ENCODE measurements at regions of chr13 and their contacts with region 1.

Region 1: DNA sequence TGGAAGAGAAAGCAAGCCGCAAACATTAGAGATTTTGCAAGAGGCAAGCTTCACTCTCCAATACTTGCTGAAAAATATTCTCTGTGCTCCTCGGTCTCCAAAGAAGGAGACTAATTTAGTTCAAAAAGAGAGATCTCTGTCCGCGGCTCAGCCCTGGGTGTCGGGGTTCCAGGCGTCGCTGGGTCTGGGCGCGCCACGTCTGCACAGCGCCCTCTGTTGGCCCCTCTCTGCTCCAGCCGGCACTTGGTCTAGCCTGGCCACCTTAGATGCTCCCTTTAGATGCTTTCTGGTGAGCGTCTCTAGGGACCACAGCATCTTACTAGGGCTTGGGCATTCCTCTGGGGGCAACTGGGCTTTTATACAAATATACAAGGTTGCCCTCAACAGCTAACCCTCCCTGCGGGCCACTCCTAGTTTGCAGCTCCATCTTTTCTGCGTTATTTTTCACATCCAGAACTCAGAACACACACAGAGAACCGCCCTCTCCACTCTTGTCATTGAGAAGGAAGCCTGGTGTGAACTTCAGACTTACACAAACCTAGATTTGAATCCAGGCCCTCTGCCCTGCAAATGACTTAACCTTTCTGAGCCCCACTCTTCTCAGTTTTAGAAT is 78.3 kb downstream of the CYSLTR2 start:
- DNase-seq: peak in 1 of 2 donors; percentile 46
- ATAC-seq: peak in 5 of 8 donors; percentile 35 to 75 (median 53)
- H3K4me3 ChIP-seq: peak overlapping the region in 3 of 10 donors; percentile 13 to 28 (median 22)
- H3K27ac ChIP-seq: peak overlapping the region in 1 of 10 donors; percentile 28
- H3K4me1 ChIP-seq: peaks cover 0 to 17% (median 0%) of the 10 kb centered on the region in 9 donors
- H3K27me3 ChIP-seq: no peaks in the 10 kb centered on the region
- CTCF ChIP-seq: peak in 8 of 9 donors; percentile 22 to 78 (median 62)

Region 2: DNA sequence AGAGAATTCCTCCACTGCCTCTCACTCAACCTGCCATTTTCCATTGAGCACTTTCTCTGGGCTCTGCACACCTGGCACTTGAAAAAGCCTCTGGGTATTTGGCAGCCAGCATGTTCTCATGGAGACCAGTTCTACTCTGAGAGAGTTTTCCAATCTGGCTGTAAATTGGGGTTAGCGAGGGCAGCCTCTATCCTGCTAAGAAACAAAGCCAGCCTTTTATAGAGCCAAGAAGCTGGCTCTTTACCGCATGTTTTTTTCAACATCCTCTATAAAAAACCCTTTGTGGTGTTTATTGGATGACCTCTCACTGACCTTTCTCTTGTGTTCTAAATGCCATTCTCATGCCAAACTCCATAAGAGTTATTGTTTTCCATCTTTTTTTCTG is 146.6 kb before region 1 on chr13:
- intact Hi-C with region 1: loop called in 2 of 10 experiments (anchors 5 to 10 kb)
- DNase-seq: peak in 1 of 2 donors; percentile 42
- ATAC-seq: peak; percentile 56 to 87 (median 76)
- H3K4me3 ChIP-seq: no peak overlapping the region
- H3K27ac ChIP-seq: peak overlapping the region in 8 of 10 donors; percentile 36 to 79 (median 54)
- H3K4me1 ChIP-seq: peaks cover 3 to 51% (median 37%) of the 10 kb centered on the region in 9 donors
- H3K27me3 ChIP-seq: no peaks in the 10 kb centered on the region
- CTCF ChIP-seq: no peak

Region 3: DNA sequence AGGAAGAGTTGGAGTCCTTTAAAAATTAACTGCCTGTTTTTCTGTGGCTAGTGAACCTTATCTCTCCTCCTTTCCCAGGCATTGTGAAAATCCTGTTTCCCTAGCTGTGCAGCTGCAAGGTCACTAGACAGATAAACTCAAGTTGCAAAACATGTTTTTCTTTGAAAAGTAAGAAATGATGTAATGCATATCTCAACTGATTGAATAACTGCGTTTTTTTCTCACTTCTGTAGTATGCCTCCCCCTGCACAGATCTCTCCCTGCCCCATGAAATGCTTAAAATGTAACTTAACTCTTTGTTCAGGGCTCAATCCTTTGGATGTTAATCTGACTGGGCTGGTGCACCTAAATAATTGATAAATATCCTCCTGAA is 106.0 kb before region 1 on chr13:
- intact Hi-C with region 1: loop called in 1 of 10 experiments (anchors 10 kb)
- DNase-seq: peak in 1 of 2 donors; percentile 48
- ATAC-seq: peak in 6 of 8 donors; percentile 46 to 73 (median 55)
- H3K4me3 ChIP-seq: no peak overlapping the region
- H3K27ac ChIP-seq: peak overlapping the region; percentile 63 to 92 (median 79)
- H3K4me1 ChIP-seq: peaks cover 0 to 46% (median 26%) of the 10 kb centered on the region in 9 donors
- H3K27me3 ChIP-seq: no peaks in the 10 kb centered on the region
- CTCF ChIP-seq: no peak

Measured in heart right ventricle (tissue), 16 donors.